ENCODE measurements at regions of chr1 and their contacts with region 1.

Region 1: GRCh38 chr1:215566556-215567490 is at the start of gene KCTD3:
- DNase-seq: peak; percentile 90
- H3K4me3 Mint-ChIP-seq: peak within 1 kb of the TSS; percentile 98
- H3K27ac Mint-ChIP-seq: peak within 1 kb of the TSS; percentile 99
- H3K4me1 Mint-ChIP-seq: peaks cover 28% of the 10 kb centered on the region
- H3K27me3 Mint-ChIP-seq: no peaks in the 10 kb centered on the region
- CTCF ChIP-seq: no peak
- total RNA-seq, gene KCTD3: 78.9 and 90.3 TPM in 2 replicates

Region 2: DNA sequence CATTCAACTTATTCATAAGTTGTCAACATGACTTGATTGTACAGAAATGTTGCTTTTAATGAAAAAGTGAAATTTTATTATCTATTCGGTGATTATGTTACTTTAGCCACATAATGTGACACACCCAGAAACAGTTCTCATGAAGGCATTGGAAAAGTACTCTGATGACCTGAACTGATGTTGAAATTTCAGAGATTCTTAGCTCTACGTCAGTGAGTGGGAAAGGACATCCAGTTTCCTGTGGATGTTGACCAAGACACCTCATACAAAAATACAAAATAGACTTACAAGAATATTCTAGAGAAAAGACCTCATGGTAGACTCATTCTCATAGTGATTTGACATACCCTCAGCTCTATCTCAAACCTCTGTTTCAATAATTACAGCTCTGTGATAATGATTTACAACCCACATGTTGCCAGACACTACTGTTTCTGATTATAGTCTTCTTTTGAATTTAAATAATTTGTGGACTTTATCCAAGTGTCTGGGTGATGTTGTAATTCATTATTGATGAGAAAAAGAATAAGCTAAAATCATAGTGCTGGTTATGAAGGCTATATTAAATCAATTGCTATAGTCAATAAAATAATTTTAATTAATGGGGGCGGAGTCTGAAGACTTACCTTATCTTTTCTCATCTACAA is 447.0 kb before region 1 on chr1:
- CTCF ChIA-PET with region 1: no interaction called
- POLR2A ChIA-PET with region 1: interaction called, 12 read pairs
- intact Hi-C with region 1: no loop called
- DNase-seq: peak; percentile 88
- H3K4me3 Mint-ChIP-seq: peak overlapping the region; percentile 2
- H3K27ac Mint-ChIP-seq: peak overlapping the region; percentile 97
- H3K4me1 Mint-ChIP-seq: peaks cover 48% of the 10 kb centered on the region
- H3K27me3 Mint-ChIP-seq: no peaks in the 10 kb centered on the region
- CTCF ChIP-seq: no peak

Region 3: DNA sequence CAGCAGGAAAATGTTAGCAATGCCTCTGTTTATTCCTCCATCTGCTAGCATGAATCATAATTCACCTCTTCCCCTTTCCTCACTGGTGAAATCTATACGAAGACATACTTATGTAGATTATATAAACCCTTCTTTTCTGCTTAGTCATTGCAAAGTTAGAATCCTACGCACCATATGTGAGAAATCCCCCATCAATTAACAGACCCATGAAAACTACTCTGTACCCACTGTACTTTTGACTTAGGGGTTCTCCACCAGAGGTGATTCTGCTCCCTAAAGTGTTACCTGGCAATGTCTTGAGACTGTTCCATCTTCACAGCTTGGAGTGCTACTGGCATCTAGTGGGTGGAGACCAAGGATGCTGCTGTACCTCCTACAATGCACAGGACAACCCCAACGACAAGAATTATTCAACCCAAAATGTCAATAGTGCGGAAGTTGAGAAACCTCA is 49.4 kb before region 1 on chr1:
- CTCF ChIA-PET with region 1: no interaction called
- POLR2A ChIA-PET with region 1: no interaction called
- intact Hi-C with region 1: no loop called
- DNase-seq: peak; percentile 79
- H3K4me3 Mint-ChIP-seq: no peak overlapping the region
- H3K27ac Mint-ChIP-seq: peak overlapping the region; percentile 65
- H3K4me1 Mint-ChIP-seq: peaks cover 12% of the 10 kb centered on the region
- H3K27me3 Mint-ChIP-seq: no peaks in the 10 kb centered on the region
- CTCF ChIP-seq: peak; percentile 87

Region 4: GRCh38 chr1:215543191-215543606 is 23.6 kb before region 1 on chr1:
- CTCF ChIA-PET with region 1: interaction called, 4 read pairs
- POLR2A ChIA-PET with region 1: interaction called, 117 read pairs
- intact Hi-C with region 1: no loop called
- DNase-seq: peak; percentile 79
- H3K4me3 Mint-ChIP-seq: no peak overlapping the region
- H3K27ac Mint-ChIP-seq: peak overlapping the region; percentile 24
- H3K4me1 Mint-ChIP-seq: peaks cover 35% of the 10 kb centered on the region
- H3K27me3 Mint-ChIP-seq: no peaks in the 10 kb centered on the region
- CTCF ChIP-seq: no peak

Region 5: GRCh38 chr1:215595208-215595607 is 28.4 kb after region 1 on chr1:
- CTCF ChIA-PET with region 1: interaction called, 3 read pairs
- POLR2A ChIA-PET with region 1: interaction called, 36 read pairs
- intact Hi-C with region 1: no loop called
- DNase-seq: no peak
- H3K4me3 Mint-ChIP-seq: no peak overlapping the region
- H3K27ac Mint-ChIP-seq: peak overlapping the region; percentile 33
- H3K4me1 Mint-ChIP-seq: peaks cover 17% of the 10 kb centered on the region
- H3K27me3 Mint-ChIP-seq: no peaks in the 10 kb centered on the region
- CTCF ChIP-seq: no peak

Region 6: GRCh38 chr1:215612391-215612790 is 45.6 kb after region 1 on chr1:
- CTCF ChIA-PET with region 1: no interaction called
- POLR2A ChIA-PET with region 1: interaction called, 28 read pairs
- intact Hi-C with region 1: no loop called
- DNase-seq: no peak
- H3K4me3 Mint-ChIP-seq: no peak overlapping the region
- H3K27ac Mint-ChIP-seq: no peak overlapping the region
- H3K4me1 Mint-ChIP-seq: no peaks in the 10 kb centered on the region
- H3K27me3 Mint-ChIP-seq: no peaks in the 10 kb centered on the region
- CTCF ChIP-seq: no peak